ENCODE measurements at regions of chr10 and their contacts with region 1.

Region 1: GRCh38 chr10:49512121-49512809 is 26.7 kb downstream of the ERCC6 start:
- DNase-seq: no peak
- H3K4me3 ChIP-seq: no peak overlapping the region
- H3K27ac ChIP-seq: no peak overlapping the region
- H3K4me1 ChIP-seq: no peaks in the 10 kb centered on the region
- H3K27me3 ChIP-seq: no peaks in the 10 kb centered on the region
- CTCF ChIP-seq: peak in 2 of 3 experiments; percentile 11 to 17
- POLR2A ChIP-seq: no peak

Region 2: GRCh38 chr10:49407552-49408137 is 104.6 kb before region 1 on chr10:
- intact Hi-C with region 1: loop called (anchors 5 kb)
- DNase-seq: no peak
- H3K4me3 ChIP-seq: no peak overlapping the region
- H3K27ac ChIP-seq: no peak overlapping the region
- H3K4me1 ChIP-seq: no peaks in the 10 kb centered on the region
- H3K27me3 ChIP-seq: no peaks in the 10 kb centered on the region
- CTCF ChIP-seq: peak; percentile 40 to 79 (median 63)
- POLR2A ChIP-seq: no peak